Breast epithelium (tissue), 4 donors: ENCODE measurements at regions of chr1 and their contacts with region 1.

Region 1: DNA sequence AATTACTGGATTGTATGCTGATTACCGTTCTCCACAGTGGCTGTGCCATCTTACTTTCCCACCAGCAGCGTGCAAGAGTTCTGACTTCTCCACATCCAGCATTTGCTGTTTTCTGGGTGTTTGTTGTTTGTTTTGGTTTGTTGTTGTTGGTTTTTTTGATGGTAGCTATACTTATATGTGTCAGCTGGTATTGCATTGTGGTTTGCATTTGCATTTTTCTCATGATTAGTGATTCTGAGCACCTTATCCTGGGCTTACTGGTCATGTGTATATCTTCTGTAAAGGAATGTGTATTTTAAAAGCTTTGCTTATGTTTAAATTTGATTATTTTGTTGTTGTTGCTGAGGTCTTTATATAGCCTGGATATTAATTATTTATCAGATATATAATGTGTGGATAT is 66.9 kb upstream of the MAP1LC3C start:
- DNase-seq: no peak
- H3K4me3 ChIP-seq: no peak overlapping the region
- H3K27ac ChIP-seq: no peak overlapping the region
- H3K4me1 ChIP-seq: no peaks in the 10 kb centered on the region
- H3K27me3 ChIP-seq: no peaks in the 10 kb centered on the region
- CTCF ChIP-seq: no peak
- POLR2A ChIP-seq: no peak

Region 2: DNA sequence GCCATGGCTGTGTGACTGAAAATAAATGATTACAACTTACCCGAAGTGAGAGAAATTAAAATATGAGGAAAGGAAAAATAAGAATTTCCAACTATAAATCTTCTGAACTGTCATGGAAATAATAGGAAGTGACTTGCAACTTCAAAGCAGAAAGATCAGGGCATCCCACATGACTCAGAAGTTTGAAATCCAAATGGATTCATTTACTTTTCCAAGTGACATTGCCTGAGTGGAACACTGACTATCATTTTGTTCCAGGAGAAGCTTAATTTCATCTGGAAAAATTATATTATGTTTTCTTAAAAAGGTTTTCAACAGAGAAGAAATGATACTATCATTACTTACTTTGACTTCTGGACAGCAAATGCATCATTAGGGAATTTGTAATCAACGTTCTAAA is 1564.7 kb before region 1 on chr1:
- intact Hi-C with region 1: no loop called
- DNase-seq: no peak
- H3K4me3 ChIP-seq: no peak overlapping the region
- H3K27ac ChIP-seq: no peak overlapping the region
- H3K4me1 ChIP-seq: no peaks in the 10 kb centered on the region
- H3K27me3 ChIP-seq: no peaks in the 10 kb centered on the region
- CTCF ChIP-seq: no peak
- POLR2A ChIP-seq: no peak

Region 3: GRCh38 chr1:242613266-242613815 is 547.5 kb after region 1 on chr1:
- intact Hi-C with region 1: loop called (anchors 5 kb)
- DNase-seq: no peak
- H3K4me3 ChIP-seq: no peak overlapping the region
- H3K27ac ChIP-seq: no peak overlapping the region
- H3K4me1 ChIP-seq: no peaks in the 10 kb centered on the region
- H3K27me3 ChIP-seq: no peaks in the 10 kb centered on the region
- CTCF ChIP-seq: no peak
- POLR2A ChIP-seq: no peak